ENCODE measurements at regions of chr14 and their contacts with region 1.

Region 1: GRCh38 chr14:93115069-93115820 is 480 bp downstream of the ITPK1 start:
- DNase-seq: peak; percentile 80
- H3K4me3 Mint-ChIP-seq: peak overlapping the region; percentile 77
- H3K27ac Mint-ChIP-seq: no peak overlapping the region
- H3K4me1 Mint-ChIP-seq: peaks cover 24% of the 10 kb centered on the region
- H3K27me3 Mint-ChIP-seq: no peaks in the 10 kb centered on the region

Region 2: GRCh38 chr14:93064411-93065323 is 50.6 kb before region 1 on chr14:
- CTCF ChIA-PET with region 1: interaction called, 12 read pairs
- intact Hi-C with region 1: no loop called
- DNase-seq: no peak
- H3K4me3 Mint-ChIP-seq: no peak overlapping the region
- H3K27ac Mint-ChIP-seq: no peak overlapping the region
- H3K4me1 Mint-ChIP-seq: peaks cover 39% of the 10 kb centered on the region
- H3K27me3 Mint-ChIP-seq: no peaks in the 10 kb centered on the region

Region 3: DNA sequence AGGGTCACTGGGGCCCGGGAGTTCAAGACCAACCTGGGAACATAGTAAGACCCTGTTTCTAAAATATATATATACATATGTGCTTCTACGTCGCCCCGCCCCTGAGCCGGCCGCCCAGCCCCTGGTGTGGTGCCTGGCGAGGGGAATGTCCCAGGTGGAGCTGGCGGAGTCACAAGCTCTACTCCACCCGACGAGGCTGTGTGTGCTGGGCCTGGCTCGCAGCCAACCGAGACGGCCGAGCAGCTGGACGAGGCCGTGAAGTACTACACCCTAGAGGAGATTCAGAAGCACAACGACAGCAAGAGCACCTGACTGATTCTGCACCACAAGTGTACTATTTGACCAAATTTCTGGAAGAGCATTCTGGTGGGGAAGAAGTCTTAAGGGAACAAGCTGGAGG is 22.6 kb after region 1 on chr14:
- CTCF ChIA-PET with region 1: interaction called, 100 read pairs
- intact Hi-C with region 1: loop called (anchors 1 kb)
- DNase-seq: no peak
- H3K4me3 Mint-ChIP-seq: no peak overlapping the region
- H3K27ac Mint-ChIP-seq: no peak overlapping the region
- H3K4me1 Mint-ChIP-seq: peaks cover 2% of the 10 kb centered on the region
- H3K27me3 Mint-ChIP-seq: no peaks in the 10 kb centered on the region

Region 4: DNA sequence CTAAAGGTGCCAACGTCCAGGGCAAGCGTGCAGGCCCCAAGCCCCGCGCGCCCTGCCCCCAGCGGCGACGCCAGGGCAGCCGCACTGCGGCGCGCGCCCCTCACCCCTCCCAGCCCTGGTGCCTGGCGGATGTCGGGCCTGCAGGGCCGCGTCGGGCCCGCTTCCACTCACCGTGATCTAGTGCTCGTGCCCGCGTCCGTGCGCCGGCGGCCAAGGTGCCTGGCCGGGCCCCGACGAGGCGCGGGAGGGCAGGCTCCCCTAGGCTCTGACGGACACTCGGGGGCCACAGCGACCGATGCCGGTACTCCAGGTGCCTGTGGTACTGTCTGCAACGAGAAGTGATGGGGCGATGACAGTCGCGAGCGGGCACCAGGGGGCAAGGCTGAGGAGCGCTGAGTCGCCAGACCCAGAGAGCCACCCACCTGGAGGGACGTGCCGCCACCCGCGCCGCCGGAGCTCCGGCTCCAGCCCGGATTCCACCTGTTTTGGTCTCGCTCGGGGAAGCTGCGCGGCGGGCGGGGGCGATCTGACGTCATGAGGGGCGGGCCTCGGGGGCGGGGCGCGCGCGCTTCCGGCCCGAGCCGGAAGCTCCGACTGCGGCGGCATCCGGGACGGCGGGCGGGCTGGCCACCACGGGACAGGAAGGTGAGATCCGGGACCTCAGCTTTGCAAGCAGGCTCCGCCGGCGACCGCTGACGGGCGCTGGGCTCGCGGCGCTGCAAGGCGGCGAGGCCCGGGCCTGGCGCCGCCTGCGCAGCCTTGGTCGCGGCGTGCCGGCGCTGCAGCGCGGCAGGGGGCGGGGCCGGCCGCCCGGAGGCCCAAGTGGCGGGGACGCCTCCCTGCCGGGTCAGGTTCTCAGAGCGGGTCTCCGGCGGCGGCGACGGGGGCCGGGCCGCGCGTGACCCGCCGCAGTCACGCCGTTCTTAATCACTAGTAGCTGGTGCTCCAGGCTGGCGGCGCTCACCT is 69.4 kb after region 1 on chr14 and contains the starts of genes LYSET and MOAP1:
- CTCF ChIA-PET with region 1: interaction called, 31 read pairs
- intact Hi-C with region 1: loop called (anchors 1 kb)
- DNase-seq: peak; percentile 91
- H3K4me3 Mint-ChIP-seq: peak within 1 kb of the TSS; percentile 88
- H3K27ac Mint-ChIP-seq: peak within 1 kb of the TSS; percentile 91
- H3K4me1 Mint-ChIP-seq: peaks cover 42% of the 10 kb centered on the region
- H3K27me3 Mint-ChIP-seq: no peaks in the 10 kb centered on the region
- total RNA-seq, gene LYSET: 11.4 to 11.6 TPM
- total RNA-seq, gene MOAP1: 11.9 to 13.1 TPM

Region 5: GRCh38 chr14:93332853-93333630 is 217.8 kb after region 1 on chr14 and contains the start of gene BTBD7:
- CTCF ChIA-PET with region 1: interaction called, 5 read pairs
- intact Hi-C with region 1: loop called (anchors 2 kb)
- DNase-seq: peak; percentile 94
- H3K4me3 Mint-ChIP-seq: peak within 1 kb of the TSS; percentile 89
- H3K27ac Mint-ChIP-seq: peak within 1 kb of the TSS; percentile 83
- H3K4me1 Mint-ChIP-seq: peaks cover 49% of the 10 kb centered on the region
- H3K27me3 Mint-ChIP-seq: no peaks in the 10 kb centered on the region
- total RNA-seq, gene BTBD7: 7.2 to 7.7 TPM

Region 6: DNA sequence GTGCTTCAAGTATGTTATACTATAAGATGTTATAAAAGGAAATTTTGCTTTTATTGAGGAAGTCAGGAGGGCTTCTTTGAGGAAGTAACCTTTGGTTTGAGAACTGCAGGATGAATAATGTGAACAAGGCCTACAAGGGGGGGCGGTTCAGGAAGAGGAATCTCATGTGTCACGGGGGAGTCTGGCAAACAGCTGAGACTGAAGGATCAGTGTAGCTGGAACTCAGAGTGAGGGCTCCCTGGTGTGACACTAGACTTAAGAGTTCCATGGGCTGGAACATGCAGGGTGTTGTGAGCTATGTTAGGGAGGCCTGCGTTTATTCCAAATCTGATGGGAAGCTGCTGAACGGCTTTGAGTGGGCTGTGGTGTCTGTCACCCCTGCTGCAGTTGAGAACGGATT is 377.8 kb after region 1 on chr14:
- CTCF ChIA-PET with region 1: no interaction called
- intact Hi-C with region 1: no loop called
- DNase-seq: no peak
- H3K4me3 Mint-ChIP-seq: no peak overlapping the region
- H3K27ac Mint-ChIP-seq: no peak overlapping the region
- H3K4me1 Mint-ChIP-seq: no peaks in the 10 kb centered on the region
- H3K27me3 Mint-ChIP-seq: peaks cover 3% of the 10 kb centered on the region

Region 7: GRCh38 chr14:93906341-93907329 is 791.4 kb after region 1 on chr14:
- CTCF ChIA-PET with region 1: no interaction called
- intact Hi-C with region 1: loop called (anchors 10 kb)
- DNase-seq: peak; percentile 82
- H3K4me3 Mint-ChIP-seq: no peak overlapping the region
- H3K27ac Mint-ChIP-seq: no peak overlapping the region
- H3K4me1 Mint-ChIP-seq: peaks cover 2% of the 10 kb centered on the region
- H3K27me3 Mint-ChIP-seq: peaks cover 4% of the 10 kb centered on the region

Measured in activated naive CD4-positive, alpha-beta T cell treated with anti-CD3 and anti-CD28 coated beads for 36 hours (primary cell).